ENCODE measurements at regions of chr12 and their contacts with region 1.

Region 1: GRCh38 chr12:49366652-49367380 is 446 bp upstream of the SPATS2 start:
- DNase-seq: peak; percentile 93

Region 2: GRCh38 chr12:48873096-48873495 is 493.7 kb before region 1 on chr12:
- CTCF ChIA-PET with region 1: no interaction called
- POLR2A ChIA-PET with region 1: no interaction called
- DNase-seq: no peak

Region 3: GRCh38 chr12:49322708-49323523 is 43.9 kb before region 1 on chr12 and contains the start of gene TROAP:
- CTCF ChIA-PET with region 1: no interaction called
- POLR2A ChIA-PET with region 1: interaction called, 22 read pairs
- DNase-seq: peak; percentile 97

Region 4: GRCh38 chr12:49347384-49348237 is 19.2 kb before region 1 on chr12:
- CTCF ChIA-PET with region 1: interaction called, 17 read pairs
- POLR2A ChIA-PET with region 1: interaction called, 23 read pairs
- DNase-seq: peak; percentile 89

Region 5: DNA sequence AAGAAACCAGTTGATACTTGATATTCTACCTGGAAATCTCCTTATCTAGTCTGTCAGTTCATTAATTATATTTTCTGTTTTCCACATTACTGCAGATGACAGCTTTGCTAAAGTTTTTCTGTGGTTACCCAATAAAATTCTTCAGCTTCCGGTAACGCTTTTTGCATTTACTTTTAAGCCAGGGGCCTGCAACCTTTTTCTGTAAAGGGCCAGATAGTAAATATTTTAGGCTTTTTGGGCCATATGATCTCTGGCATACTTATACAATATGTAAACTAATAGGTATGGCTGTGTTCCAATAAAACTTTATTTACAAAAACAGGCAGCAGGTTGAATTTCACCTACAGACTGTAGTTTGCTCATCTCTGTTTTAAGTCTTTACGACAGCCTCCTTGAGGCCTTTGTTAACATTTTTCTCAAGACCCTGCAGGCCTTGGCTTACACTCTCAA is 48.7 kb after region 1 on chr12:
- CTCF ChIA-PET with region 1: no interaction called
- POLR2A ChIA-PET with region 1: interaction called, 12 read pairs
- DNase-seq: no peak

Region 6: DNA sequence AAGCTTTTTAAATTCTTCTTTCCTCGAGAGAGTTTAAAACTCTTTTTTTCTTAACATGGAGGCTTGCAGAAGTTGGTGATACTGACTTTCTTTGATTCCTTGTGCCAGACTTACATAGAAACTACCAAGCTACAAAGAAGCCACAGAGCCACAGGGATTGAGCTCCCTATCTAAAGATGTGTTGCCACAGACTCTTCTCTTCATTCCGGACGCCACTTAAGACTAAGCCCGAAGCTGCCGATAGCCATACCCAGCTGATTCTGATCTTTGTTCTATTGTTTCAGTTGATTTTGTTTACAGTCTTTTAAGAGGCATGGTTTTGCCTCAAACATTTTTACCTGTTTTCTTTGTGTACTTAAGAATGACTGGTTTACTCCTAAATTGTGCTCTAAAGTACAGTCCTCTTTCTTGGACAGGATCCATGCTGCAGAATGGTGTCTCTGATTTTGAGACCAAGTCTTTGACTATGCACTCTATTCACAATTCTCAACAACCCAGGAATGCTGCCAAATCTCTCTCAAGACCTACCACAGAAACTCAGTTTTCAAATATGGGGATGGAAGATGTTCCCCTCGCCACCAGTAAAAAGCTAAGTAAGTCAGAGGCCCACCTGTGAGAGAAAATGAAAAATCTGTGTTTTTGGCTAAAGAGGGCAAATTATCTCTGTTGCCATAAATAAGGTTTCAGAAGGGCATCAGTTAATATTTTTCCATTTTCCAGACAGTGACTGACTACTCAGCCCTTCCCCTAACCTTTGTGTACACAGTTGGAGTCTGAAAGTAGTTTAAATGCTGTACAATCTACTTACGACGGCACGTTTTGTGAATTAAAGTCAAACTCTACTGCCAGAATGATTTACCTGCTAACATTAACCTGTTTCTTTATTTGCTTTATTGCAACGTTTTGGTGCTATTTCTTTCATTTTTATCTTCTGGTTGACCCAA is 129.9 kb after region 1 on chr12:
- CTCF ChIA-PET with region 1: no interaction called
- POLR2A ChIA-PET with region 1: interaction called, 11 read pairs
- DNase-seq: no peak